Posterior vena cava (tissue), 2 donors: ENCODE measurements at regions of chr1 and their contacts with region 1.

Region 1: GRCh38 chr1:110229348-110230001 is 19.4 kb downstream of the KCNC4 start:
- DNase-seq: no peak

Region 2: GRCh38 chr1:110407260-110408210 is 178.1 kb after region 1 on chr1 and contains the start of gene LAMTOR5:
- intact Hi-C with region 1: loop called in 1 of 2 experiments (anchors 1 kb)
- DNase-seq: peak; percentile 98
- total RNA-seq, gene LAMTOR5: 87.4 to 91.5 TPM